Activated T-helper 2 cell treated with anti-CD3 and anti-CD28 coated beads, Interferon-gamma antibody, Interleukin-2, Interleukin-4, amounts not matched to agents 10 μg/mL and 5 μg/mL and 100 μg/mL, durations not matched to agents 14 hours and 24 hours and 36 hours (primary cell): ENCODE measurements at regions of chr6 and their contacts with region 1.

Region 1: GRCh38 chr6:159929819-159930218 is 39.0 kb downstream of the MAS1 start:
- DNase-seq: no peak
- H3K4me3 Mint-ChIP-seq: no peak overlapping the region
- H3K27ac Mint-ChIP-seq: peak overlapping the region; percentile 5
- H3K4me1 Mint-ChIP-seq: peaks cover 28% of the 10 kb centered on the region
- H3K27me3 Mint-ChIP-seq: peaks cover 9% of the 10 kb centered on the region

Region 2: DNA sequence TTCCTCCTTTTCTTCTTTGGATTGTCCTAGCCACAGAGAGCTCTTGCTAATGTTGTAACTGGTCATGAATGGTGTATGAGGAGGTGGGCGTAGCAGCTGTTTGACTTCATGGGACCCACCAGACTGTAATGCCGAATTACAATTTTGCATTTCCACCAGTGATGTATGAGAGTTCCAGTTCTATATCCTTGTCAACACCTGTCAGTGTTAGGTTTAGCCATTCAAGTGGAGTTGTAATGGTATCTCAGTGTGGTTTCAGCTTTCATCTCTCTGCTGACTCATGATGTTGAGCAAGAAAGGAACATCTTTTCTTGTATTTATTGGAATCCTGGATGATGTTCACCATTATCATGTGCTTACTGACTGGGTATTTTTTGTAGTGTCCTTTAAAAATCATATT is 44.1 kb after region 1 on chr6:
- intact Hi-C with region 1: loop called (anchors 2 kb)
- DNase-seq: no peak
- H3K4me3 Mint-ChIP-seq: peak overlapping the region; percentile 48
- H3K27ac Mint-ChIP-seq: peak overlapping the region; percentile 91
- H3K4me1 Mint-ChIP-seq: peaks cover 81% of the 10 kb centered on the region
- H3K27me3 Mint-ChIP-seq: no peaks in the 10 kb centered on the region

Region 3: DNA sequence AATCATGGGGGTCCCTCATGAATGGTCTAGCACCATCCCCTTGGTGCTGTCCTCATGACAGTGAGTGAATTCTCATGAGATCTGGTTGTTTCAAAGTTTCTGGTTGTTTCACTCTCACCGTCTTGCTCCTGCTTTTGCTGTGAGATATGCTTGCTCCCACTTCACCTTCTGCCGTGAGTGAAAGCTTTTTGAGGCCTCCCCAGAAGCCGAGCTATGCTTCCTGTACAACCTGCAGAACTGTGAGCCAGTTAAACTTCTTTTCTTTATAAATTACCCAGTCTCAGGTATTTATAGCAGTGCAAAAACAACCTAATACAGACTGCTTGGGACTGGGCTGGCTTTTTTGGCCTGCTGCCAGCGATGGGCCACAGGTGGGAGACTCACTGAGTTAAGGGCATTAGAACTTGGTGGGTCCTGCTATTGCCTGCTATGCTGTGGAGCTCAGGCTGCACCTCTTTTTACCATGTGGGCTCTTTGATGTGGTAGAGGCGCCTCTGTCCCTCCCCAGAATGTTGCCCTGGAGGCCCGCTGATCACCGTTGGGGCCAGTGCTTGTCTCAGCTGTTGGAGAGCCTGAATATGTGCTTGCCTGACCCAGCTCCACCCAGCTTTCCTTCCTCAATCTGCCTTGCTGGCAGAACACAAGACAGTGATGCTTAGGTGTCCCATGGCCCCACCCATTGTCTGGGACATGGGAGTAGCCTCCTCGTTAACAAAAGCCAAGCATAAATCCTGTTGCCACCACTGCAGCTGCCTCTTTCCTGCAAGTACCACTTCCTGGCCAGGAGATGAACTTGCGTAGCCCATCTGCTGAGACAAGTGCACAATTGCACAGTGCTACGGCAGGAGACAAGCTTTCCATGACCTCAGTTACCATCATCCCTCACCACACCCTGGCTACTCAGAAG is 86.2 kb after region 1 on chr6:
- intact Hi-C with region 1: loop called (anchors 1 kb)
- DNase-seq: peak; percentile 65
- H3K4me3 Mint-ChIP-seq: peak overlapping the region; percentile 3
- H3K27ac Mint-ChIP-seq: peak overlapping the region; percentile 91
- H3K4me1 Mint-ChIP-seq: peaks cover 66% of the 10 kb centered on the region
- H3K27me3 Mint-ChIP-seq: no peaks in the 10 kb centered on the region